ENCODE measurements at regions of chr1 and their contacts with region 1.

Region 1: GRCh38 chr1:48480504-48480903 is 8.5 kb upstream of the SPATA6 start:
- DNase-seq: no peak
- ATAC-seq: no peak
- H3K4me3 ChIP-seq: no peak overlapping the region
- H3K27ac ChIP-seq: no peak overlapping the region
- H3K4me1 ChIP-seq: no peaks in the 10 kb centered on the region
- H3K27me3 ChIP-seq: no peaks in the 10 kb centered on the region
- CTCF ChIP-seq: no peak
- POLR2A ChIP-seq: no peak

Region 2: DNA sequence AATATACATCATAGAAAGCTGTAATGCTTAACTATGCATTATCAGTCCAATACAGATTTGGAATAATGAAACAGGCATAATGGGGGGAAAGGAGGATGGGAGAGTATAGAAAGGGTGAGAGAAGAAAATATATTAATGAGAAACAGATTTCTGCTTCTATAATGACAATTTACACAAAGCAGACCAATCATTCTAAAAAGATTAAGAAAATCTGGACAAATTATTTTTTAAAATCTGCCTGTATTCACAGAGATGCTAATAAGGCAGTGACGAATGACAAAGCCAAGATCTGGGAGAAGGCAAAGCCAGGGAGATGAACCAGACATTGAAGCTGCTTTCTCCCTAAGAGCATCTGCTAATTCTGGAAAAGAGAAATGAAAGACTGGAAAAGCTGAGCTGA is 58.5 kb before region 1 on chr1:
- intact Hi-C with region 1: loop called in 1 of 10 experiments (anchors 10 kb)
- DNase-seq: no peak
- ATAC-seq: no peak
- H3K4me3 ChIP-seq: no peak overlapping the region
- H3K27ac ChIP-seq: no peak overlapping the region
- H3K4me1 ChIP-seq: no peaks in the 10 kb centered on the region
- H3K27me3 ChIP-seq: no peaks in the 10 kb centered on the region
- CTCF ChIP-seq: no peak
- POLR2A ChIP-seq: no peak